GM10248 (cell line): ENCODE measurements at regions of chr10 and their contacts with region 1.

Region 1: GRCh38 chr10:84328418-84329195 is at the start of gene CCSER2:
- DNase-seq: peak; percentile 99
- CTCF ChIP-seq: no peak

Region 2: GRCh38 chr10:84194424-84195040 is 134.1 kb before region 1 on chr10 and contains the start of gene CDHR1:
- CTCF ChIA-PET with region 1: no interaction called
- POLR2A ChIA-PET with region 1: no interaction called
- DNase-seq: peak; percentile 65
- CTCF ChIP-seq: no peak

Region 3: DNA sequence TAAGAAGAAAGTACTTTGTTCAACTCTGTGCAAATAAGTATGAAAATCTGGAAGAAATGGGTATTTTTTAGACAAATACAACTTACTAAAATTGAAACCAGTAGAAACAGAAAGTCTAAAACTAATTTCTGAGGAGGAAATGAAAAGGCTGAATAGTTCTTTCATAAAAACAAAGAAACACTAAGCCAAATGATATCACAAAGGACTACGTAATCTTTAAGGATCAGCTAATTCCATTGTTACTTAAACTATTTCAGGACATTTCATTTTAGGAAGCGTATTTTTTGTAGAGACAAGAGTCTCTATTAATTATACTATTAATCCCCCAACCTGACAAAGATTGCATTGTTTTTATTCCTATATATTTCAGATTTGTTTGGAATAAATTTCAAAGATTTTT is 11.4 kb before region 1 on chr10:
- CTCF ChIA-PET with region 1: interaction called, 10 read pairs
- POLR2A ChIA-PET with region 1: no interaction called
- DNase-seq: peak; percentile 34
- CTCF ChIP-seq: no peak